B cell (primary cell): ENCODE measurements at regions of chr4 and their contacts with region 1.

Region 1: GRCh38 chr4:127985995-127986394 is 20.8 kb downstream of the ABHD18 start:
- DNase-seq: no peak
- ATAC-seq: no peak
- H3K4me3 ChIP-seq: no peak overlapping the region
- H3K4me3 Mint-ChIP-seq: no peak overlapping the region
- H3K27ac ChIP-seq: no peak overlapping the region
- H3K27ac Mint-ChIP-seq: no peak overlapping the region
- H3K4me1 ChIP-seq: no peaks in the 10 kb centered on the region
- H3K4me1 Mint-ChIP-seq: no peaks in the 10 kb centered on the region
- H3K27me3 ChIP-seq: no peaks in the 10 kb centered on the region
- H3K27me3 Mint-ChIP-seq: no peaks in the 10 kb centered on the region
- CTCF ChIP-seq: no peak

Region 2: GRCh38 chr4:128025319-128025718 is 39.3 kb after region 1 on chr4:
- CTCF ChIA-PET with region 1: no interaction called
- POLR2A ChIA-PET with region 1: no interaction called
- intact Hi-C with region 1: loop called (anchors 5 kb)
- DNase-seq: no peak
- ATAC-seq: no peak
- H3K4me3 ChIP-seq: no peak overlapping the region
- H3K4me3 Mint-ChIP-seq: no peak overlapping the region
- H3K27ac ChIP-seq: no peak overlapping the region
- H3K27ac Mint-ChIP-seq: no peak overlapping the region
- H3K4me1 ChIP-seq: no peaks in the 10 kb centered on the region
- H3K4me1 Mint-ChIP-seq: no peaks in the 10 kb centered on the region
- H3K27me3 ChIP-seq: no peaks in the 10 kb centered on the region
- H3K27me3 Mint-ChIP-seq: no peaks in the 10 kb centered on the region
- CTCF ChIP-seq: no peak

Region 3: GRCh38 chr4:128267745-128268144 is 281.8 kb after region 1 on chr4:
- CTCF ChIA-PET with region 1: no interaction called
- POLR2A ChIA-PET with region 1: no interaction called
- intact Hi-C with region 1: no loop called
- DNase-seq: no peak
- ATAC-seq: no peak
- H3K4me3 ChIP-seq: no peak overlapping the region
- H3K4me3 Mint-ChIP-seq: no peak overlapping the region
- H3K27ac ChIP-seq: no peak overlapping the region
- H3K27ac Mint-ChIP-seq: no peak overlapping the region
- H3K4me1 ChIP-seq: no peaks in the 10 kb centered on the region
- H3K4me1 Mint-ChIP-seq: no peaks in the 10 kb centered on the region
- H3K27me3 ChIP-seq: no peaks in the 10 kb centered on the region
- H3K27me3 Mint-ChIP-seq: no peaks in the 10 kb centered on the region
- CTCF ChIP-seq: no peak